ENCODE measurements at regions of chr16 and their contacts with region 1.

Region 1: GRCh38 chr16:66849543-66849942 is 5.3 kb downstream of the CA7 start:
- DNase-seq: no peak
- ATAC-seq: no peak
- H3K4me3 ChIP-seq: no peak overlapping the region
- H3K27ac ChIP-seq: no peak overlapping the region
- H3K4me1 ChIP-seq: no peaks in the 10 kb centered on the region; the same call in 1 of the 2 replicates
- H3K27me3 ChIP-seq: peaks cover 69% of the 10 kb centered on the region
- CTCF ChIP-seq: no peak
- POLR2A ChIP-seq: no peak
- RAD21 ChIP-seq: no peak

Region 2: GRCh38 chr16:66167564-66168291 is 681.8 kb before region 1 on chr16:
- CTCF ChIA-PET with region 1: no interaction called
- POLR2A ChIA-PET with region 1: no interaction called
- dilution Hi-C with region 1: no loop called
- in situ Hi-C with region 1: no loop called
- intact Hi-C with region 1: no loop called
- DNase-seq: peak; percentile 46
- ATAC-seq: peak; percentile 55
- H3K4me3 ChIP-seq: no peak overlapping the region
- H3K27ac ChIP-seq: no peak overlapping the region
- H3K4me1 ChIP-seq: peaks cover 6% of the 10 kb centered on the region; the same call in 1 of the 2 replicates
- H3K27me3 ChIP-seq: peaks cover 5% of the 10 kb centered on the region
- CTCF ChIP-seq: peak; percentile 53
- POLR2A ChIP-seq: no peak
- RAD21 ChIP-seq: peak; percentile 66

Region 3: DNA sequence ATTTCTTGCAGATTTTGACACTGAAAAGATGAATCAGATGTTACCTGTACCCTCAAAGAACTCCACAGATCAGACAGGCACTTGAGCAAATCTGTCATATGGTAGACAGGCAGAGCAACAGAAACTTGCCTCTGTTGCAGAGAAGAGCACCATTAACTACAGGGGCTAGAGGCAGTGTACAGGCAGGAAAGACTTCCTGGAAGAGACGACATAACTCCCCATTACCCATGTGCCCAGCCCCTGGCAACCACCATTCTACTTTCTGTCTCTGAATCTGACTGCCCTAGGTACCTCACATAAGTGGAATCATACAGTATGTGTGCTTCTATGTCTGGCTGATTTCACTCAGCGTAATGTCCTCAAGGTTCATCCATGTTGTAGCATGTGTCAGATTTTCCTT is 854.1 kb after region 1 on chr16:
- CTCF ChIA-PET with region 1: no interaction called
- POLR2A ChIA-PET with region 1: interaction called, 14 read pairs
- dilution Hi-C with region 1: no loop called
- in situ Hi-C with region 1: no loop called
- intact Hi-C with region 1: no loop called
- DNase-seq: no peak
- ATAC-seq: no peak
- H3K4me3 ChIP-seq: no peak overlapping the region
- H3K27ac ChIP-seq: no peak overlapping the region
- H3K4me1 ChIP-seq: peaks cover 4% of the 10 kb centered on the region; the same call in 1 of the 2 replicates
- H3K27me3 ChIP-seq: no peaks in the 10 kb centered on the region
- CTCF ChIP-seq: no peak
- POLR2A ChIP-seq: no peak
- RAD21 ChIP-seq: no peak

Measured in IMR-90 (cell line).